ENCODE measurements at regions of chr13 and their contacts with region 1.

Region 1: DNA sequence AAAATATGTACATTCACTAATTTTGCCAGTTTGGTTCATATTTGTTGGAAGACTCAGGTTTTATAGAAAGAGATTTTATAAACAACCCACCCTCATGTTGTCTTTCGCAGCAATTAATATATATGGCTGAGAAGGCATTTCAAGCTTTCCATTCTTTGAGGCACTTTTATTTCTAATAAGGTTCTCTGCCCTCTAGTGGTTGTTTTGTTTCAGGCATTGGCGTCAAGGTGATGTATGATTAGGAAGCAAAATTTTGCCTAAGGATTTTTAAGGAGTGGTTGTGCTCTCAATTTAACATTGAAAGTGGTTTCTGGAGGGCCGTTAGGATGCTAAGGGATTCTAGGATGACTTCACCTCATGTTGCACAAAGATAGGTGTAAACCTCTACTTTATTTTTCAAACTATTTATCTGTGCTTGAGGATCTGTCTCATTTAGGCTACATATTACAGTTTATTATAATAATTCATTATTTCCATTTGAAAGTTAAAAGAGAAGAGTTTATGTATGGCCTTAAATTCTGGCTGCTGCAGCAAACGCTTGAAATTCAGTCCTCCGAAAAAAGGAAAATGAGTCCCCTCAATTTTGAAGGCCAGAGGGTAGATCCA is 35.9 kb downstream of the OXGR1 start:
- DNase-seq: no peak
- H3K4me3 Mint-ChIP-seq: no peak overlapping the region
- H3K27ac Mint-ChIP-seq: no peak overlapping the region
- H3K4me1 Mint-ChIP-seq: no peaks in the 10 kb centered on the region
- H3K27me3 Mint-ChIP-seq: no peaks in the 10 kb centered on the region
- CTCF ChIP-seq: no peak

Region 2: DNA sequence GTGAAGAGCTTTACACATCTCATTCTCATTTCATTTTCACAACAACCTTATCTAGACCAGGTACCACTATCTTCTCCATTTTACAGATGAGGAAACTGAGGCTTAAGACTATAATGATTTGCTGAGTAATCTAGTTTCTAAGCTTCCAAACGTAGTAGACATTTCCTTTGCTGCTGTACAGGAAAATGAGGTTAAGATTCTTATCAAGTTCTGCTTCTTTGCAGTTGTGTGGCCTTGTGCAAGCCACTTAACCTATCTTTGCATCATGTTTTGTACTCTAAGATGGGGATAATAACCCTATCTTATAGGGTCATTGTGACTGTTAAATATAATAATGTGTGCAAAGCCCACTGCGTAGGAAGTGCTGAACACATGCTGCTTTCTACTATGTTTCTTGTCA is 560.6 kb before region 1 on chr13:
- CTCF ChIA-PET with region 1: no interaction called
- intact Hi-C with region 1: no loop called
- DNase-seq: no peak
- H3K4me3 Mint-ChIP-seq: no peak overlapping the region
- H3K27ac Mint-ChIP-seq: no peak overlapping the region
- H3K4me1 Mint-ChIP-seq: no peaks in the 10 kb centered on the region
- H3K27me3 Mint-ChIP-seq: no peaks in the 10 kb centered on the region
- CTCF ChIP-seq: no peak

Region 3: GRCh38 chr13:96822895-96823294 is 135.5 kb before region 1 on chr13:
- CTCF ChIA-PET with region 1: no interaction called
- intact Hi-C with region 1: loop called (anchors 5 kb)
- DNase-seq: peak; percentile 4
- H3K4me3 Mint-ChIP-seq: no peak overlapping the region
- H3K27ac Mint-ChIP-seq: no peak overlapping the region
- H3K4me1 Mint-ChIP-seq: no peaks in the 10 kb centered on the region
- H3K27me3 Mint-ChIP-seq: no peaks in the 10 kb centered on the region
- CTCF ChIP-seq: no peak

Region 4: DNA sequence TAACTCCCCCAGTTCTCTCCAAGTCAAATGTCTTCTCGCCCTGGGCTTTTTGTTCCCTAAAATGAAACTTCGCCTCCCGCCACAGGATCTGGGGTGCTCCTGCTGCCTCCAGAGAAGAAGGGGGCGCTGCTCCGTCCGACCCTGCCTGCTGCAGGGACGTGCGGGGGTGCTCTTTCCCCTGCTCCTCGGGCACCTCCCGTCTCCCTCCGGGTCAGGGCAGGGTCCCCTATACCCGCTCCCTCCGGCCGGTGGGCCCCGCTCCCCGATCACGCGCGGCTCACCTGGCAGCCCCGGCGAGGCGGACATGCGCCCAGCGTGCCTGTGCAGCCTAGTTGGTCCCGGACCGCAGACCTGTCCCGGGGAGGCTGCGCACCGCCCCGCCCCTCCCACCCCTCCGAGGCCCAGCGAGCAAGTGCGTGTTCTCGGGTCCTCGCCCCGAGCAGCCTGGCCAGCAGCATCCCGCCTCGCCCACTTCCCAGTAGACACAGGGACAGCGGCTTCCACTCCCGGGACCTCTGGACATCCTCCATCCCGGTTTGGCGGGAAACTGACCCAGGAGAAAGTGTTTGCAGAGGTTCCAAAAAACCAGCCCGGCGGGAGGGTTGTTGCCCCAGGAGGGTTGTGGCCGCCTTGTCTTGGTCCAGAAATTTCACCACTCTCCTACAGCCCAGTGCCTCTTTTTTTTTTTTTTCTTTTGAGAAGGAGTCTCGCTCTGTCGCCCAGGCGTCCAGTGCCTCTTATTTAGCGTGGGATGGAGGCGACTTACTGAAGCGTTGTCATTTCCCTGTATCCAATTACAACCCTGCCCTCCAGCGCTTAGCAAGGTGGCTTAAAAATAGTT is 35.8 kb after region 1 on chr13 and contains the start of gene OXGR1:
- CTCF ChIA-PET with region 1: no interaction called
- intact Hi-C with region 1: no loop called
- DNase-seq: no peak
- H3K4me3 Mint-ChIP-seq: peak within 1 kb of the TSS; percentile 58
- H3K27ac Mint-ChIP-seq: no peak within 1 kb of the TSS
- H3K4me1 Mint-ChIP-seq: no peaks in the 10 kb centered on the region
- H3K27me3 Mint-ChIP-seq: peaks cover 20% of the 10 kb centered on the region
- CTCF ChIP-seq: no peak
- total RNA-seq, gene OXGR1: 0.40 TPM in 1 of 2 replicates, not detected in the other

Measured in Calu3 (cell line).